Activated CD8-positive, alpha-beta T cell treated with anti-CD3 and anti-CD28 coated beads, Interleukin-2, amount 10 ng/mL, durations not matched to agents 7 days and 5 days (primary cell): ENCODE measurements at regions of chr1 and their contacts with region 1.

Region 1: GRCh38 chr1:7667625-7668218 is 103.4 kb upstream of the VAMP3 start:
- DNase-seq: peak; percentile 84
- ATAC-seq: peak; percentile 81
- H3K4me3 Mint-ChIP-seq: no peak overlapping the region
- H3K27ac Mint-ChIP-seq: no peak overlapping the region
- H3K4me1 Mint-ChIP-seq: peaks cover 3% of the 10 kb centered on the region
- H3K27me3 Mint-ChIP-seq: no peaks in the 10 kb centered on the region

Region 2: DNA sequence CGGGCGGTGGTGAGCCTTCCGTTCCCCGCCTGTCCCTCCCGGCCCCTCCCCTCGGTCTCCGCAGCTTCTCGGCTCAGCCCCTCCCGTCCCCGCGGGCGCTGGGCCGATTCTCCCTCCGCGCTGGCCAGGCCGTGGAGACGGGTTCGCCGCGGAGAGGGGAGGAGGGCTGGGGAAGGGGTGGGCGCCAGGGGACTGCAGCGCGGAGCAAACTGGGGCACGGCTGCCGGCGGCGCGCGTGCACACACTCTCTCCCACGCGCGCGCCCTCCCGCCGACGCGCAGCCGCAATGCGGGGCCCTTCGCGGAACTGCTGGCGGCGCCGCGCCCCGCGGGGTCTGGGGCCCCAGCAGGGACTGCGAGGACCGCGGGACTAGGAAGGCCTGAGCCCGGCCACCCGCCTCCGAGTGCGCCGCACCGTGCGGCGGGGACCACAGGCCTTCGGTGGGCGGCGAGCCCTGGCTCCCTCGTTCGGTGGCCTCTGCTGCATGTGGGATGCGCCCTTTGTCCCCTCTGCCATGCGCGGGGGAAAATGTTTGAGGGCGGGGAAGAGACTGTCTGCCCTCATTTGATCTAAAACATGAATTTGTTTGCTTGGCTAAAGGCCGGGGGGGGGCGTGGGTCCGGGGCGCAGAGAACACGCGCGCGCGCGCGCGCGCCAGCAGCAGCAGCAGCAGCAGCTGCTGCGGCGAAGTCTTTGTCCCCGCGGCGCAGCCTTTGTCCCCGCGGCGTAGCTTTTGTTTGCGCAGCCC is 12.7 kb after region 1 on chr1:
- CTCF ChIA-PET with region 1: interaction called, 56 read pairs
- POLR2A ChIA-PET with region 1: no interaction called
- DNase-seq: no peak
- ATAC-seq: peak; percentile 58
- H3K4me3 Mint-ChIP-seq: peak overlapping the region; percentile 63
- H3K27ac Mint-ChIP-seq: no peak overlapping the region
- H3K4me1 Mint-ChIP-seq: no peaks in the 10 kb centered on the region
- H3K27me3 Mint-ChIP-seq: peaks cover 9% of the 10 kb centered on the region

Region 3: GRCh38 chr1:7694600-7695496 is 27.1 kb after region 1 on chr1:
- CTCF ChIA-PET with region 1: no interaction called
- POLR2A ChIA-PET with region 1: no interaction called
- DNase-seq: no peak
- ATAC-seq: no peak
- H3K4me3 Mint-ChIP-seq: no peak overlapping the region
- H3K27ac Mint-ChIP-seq: no peak overlapping the region
- H3K4me1 Mint-ChIP-seq: peaks cover 9% of the 10 kb centered on the region
- H3K27me3 Mint-ChIP-seq: peaks cover 3% of the 10 kb centered on the region

Region 4: GRCh38 chr1:7760245-7760644 is 92.5 kb after region 1 on chr1:
- CTCF ChIA-PET with region 1: interaction called, 515 read pairs
- POLR2A ChIA-PET with region 1: no interaction called
- DNase-seq: no peak
- ATAC-seq: no peak
- H3K4me3 Mint-ChIP-seq: no peak overlapping the region
- H3K27ac Mint-ChIP-seq: no peak overlapping the region
- H3K4me1 Mint-ChIP-seq: peaks cover 2% of the 10 kb centered on the region
- H3K27me3 Mint-ChIP-seq: peaks cover 14% of the 10 kb centered on the region

Region 5: GRCh38 chr1:7768583-7768982 is 100.9 kb after region 1 on chr1:
- CTCF ChIA-PET with region 1: interaction called, 12 read pairs
- POLR2A ChIA-PET with region 1: no interaction called
- DNase-seq: no peak
- ATAC-seq: no peak
- H3K4me3 Mint-ChIP-seq: no peak overlapping the region
- H3K27ac Mint-ChIP-seq: no peak overlapping the region
- H3K4me1 Mint-ChIP-seq: peaks cover 20% of the 10 kb centered on the region
- H3K27me3 Mint-ChIP-seq: peaks cover 31% of the 10 kb centered on the region